SK-N-SH (cell line): ENCODE measurements at regions of chr10 and their contacts with region 1.

Region 1: GRCh38 chr10:4849555-4850242 is 23.7 kb downstream of the AKR1E2 start:
- DNase-seq: peak; percentile 75
- H3K4me3 ChIP-seq: peak overlapping the region in 1 of 2 experiments; percentile 24; a peak in 1 of 4 replicates
- H3K27ac ChIP-seq: no peak overlapping the region
- H3K4me1 ChIP-seq: peaks cover 3 to 13% of the 10 kb centered on the region in 2 experiments; a peak in 2 of 4 replicates
- H3K27me3 ChIP-seq: no peaks in the 10 kb centered on the region
- CTCF ChIP-seq: peak; percentile 100
- EP300 ChIP-seq: no peak
- RAD21 ChIP-seq: peak; percentile 99

Region 2: DNA sequence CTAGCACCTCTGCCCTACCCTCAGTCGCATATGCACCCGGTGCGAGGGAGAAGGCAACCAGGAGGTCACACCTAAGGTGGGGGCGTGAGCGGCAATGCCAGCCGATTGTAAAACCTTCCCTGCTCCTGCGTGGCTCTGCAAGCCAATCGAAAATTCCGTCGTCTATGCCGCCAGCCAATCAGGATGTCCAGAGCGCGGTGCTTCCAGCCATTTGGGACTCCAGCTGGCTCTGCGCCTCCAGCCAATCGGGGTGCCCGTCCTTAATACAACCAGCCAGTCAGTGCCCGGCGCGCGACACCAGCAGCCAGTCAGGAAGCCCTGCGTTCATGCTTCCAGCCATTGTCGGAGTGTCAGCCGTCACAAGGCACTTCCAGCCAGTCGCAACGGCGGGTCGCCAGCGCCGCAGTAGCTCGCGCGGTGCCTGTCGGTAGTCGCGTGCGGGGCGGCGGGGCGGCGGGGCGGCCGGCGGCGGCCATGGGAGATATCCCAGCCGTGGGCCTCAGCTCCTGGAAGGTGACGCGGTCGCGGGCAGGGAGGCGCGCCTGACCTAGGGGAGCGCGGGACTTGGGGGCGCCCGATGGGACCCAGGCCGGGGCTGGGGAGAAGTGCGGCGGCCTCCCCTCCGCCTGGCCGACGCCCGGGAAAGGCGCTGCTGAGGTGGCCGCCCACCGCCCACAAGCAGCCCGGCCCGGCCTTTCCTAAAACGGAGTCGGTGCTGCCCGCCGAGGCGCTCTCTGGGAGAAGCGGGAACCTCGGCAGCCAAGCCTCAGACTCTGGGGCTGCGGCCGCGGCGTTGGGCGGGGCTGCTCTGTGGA is 23.6 kb before region 1 on chr10 and contains the start of gene AKR1E2:
- CTCF ChIA-PET with region 1: interaction called, 20 read pairs
- POLR2A ChIA-PET with region 1: no interaction called
- DNase-seq: peak; percentile 95
- H3K4me3 ChIP-seq: peak within 1 kb of the TSS; percentile 60 to 62
- H3K27ac ChIP-seq: peak within 1 kb of the TSS; percentile 71
- H3K4me1 ChIP-seq: peaks cover 0 to 11% of the 10 kb centered on the region in 2 experiments; a peak in 1 of 4 replicates
- H3K27me3 ChIP-seq: no peaks in the 10 kb centered on the region
- CTCF ChIP-seq: no peak
- EP300 ChIP-seq: no peak
- RAD21 ChIP-seq: no peak
- polyA plus RNA-seq, gene AKR1E2: 5.8 and 6.9 TPM in 2 replicates

Region 3: DNA sequence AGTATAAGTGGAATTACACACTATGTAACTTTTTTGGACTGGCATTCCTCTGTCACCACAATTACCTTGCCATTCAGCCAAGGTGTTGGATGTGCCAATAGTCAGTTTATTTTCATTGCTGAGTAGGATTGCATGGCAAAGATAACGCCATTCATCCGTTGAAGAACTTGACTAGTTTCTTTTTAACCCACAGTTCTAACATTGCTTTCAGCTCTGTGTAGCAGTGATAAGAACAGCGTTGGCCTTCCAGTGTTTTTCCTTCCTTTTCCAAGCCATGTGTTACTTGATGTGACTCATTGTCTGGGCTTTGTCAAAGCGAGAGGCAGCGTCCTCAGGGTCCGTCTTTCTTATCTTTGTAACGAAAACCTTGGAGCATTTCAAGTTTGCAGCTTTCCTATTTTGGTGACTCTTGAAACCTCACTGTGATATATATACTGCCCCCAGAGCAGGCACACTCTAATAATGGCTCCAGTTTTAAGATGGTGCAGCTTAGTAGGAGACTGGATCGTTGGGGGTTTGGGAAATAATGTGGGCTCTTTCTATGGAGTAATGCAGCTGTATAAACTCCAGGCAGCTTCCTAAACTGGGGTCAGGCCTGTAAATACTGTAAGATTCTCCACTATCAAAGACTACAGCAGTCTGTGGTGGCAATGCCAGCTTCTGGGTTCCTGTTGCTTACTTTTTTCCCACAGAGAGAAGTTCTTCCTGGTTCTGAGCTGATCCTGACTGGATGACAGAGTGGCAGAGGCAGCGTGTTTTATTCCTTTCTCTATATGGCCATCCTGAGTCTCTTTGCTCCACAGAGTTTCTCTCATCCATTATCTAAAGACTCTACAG is 18.0 kb after region 1 on chr10:
- CTCF ChIA-PET with region 1: interaction called, 19 read pairs
- POLR2A ChIA-PET with region 1: no interaction called
- DNase-seq: no peak
- H3K4me3 ChIP-seq: no peak overlapping the region
- H3K27ac ChIP-seq: no peak overlapping the region
- H3K4me1 ChIP-seq: no peaks in the 10 kb centered on the region
- H3K27me3 ChIP-seq: no peaks in the 10 kb centered on the region
- CTCF ChIP-seq: no peak
- EP300 ChIP-seq: no peak
- RAD21 ChIP-seq: no peak

Region 4: GRCh38 chr10:5094265-5095205 is 244.8 kb after region 1 on chr10 and contains the start of gene AKR1C3:
- CTCF ChIA-PET with region 1: interaction called, 114 read pairs
- POLR2A ChIA-PET with region 1: no interaction called
- DNase-seq: peak; percentile 32
- H3K4me3 ChIP-seq: peak within 1 kb of the TSS; percentile 48 to 57
- H3K27ac ChIP-seq: no peak within 1 kb of the TSS; a peak in 1 of 4 replicates
- H3K4me1 ChIP-seq: no peaks in the 10 kb centered on the region; a peak in 2 of 4 replicates
- H3K27me3 ChIP-seq: no peaks in the 10 kb centered on the region
- CTCF ChIP-seq: peak; percentile 73
- EP300 ChIP-seq: no peak
- RAD21 ChIP-seq: peak; percentile 66
- polyA plus RNA-seq, gene AKR1C3: 0.28 and 0.70 TPM in 2 replicates

Region 5: DNA sequence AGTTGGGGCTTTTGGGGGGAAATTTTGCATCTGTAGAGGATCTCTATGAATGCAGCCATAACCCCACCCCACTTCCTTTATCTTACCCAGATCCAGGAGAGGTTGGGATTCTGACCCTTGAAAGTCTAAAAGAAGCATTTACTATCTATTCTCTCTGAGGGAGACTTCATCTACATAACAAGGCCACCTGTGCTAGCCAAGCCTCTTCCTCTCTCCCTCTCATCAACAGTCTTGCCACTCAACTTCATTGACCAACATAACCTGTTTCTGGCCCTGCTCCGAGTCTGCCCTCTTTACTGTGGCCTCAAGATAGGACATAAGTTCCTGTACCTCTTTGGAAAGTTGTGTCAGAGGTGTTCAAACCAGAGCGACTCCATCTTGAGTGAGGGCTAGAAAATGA is 535.5 kb after region 1 on chr10:
- CTCF ChIA-PET with region 1: interaction called, 10 read pairs
- POLR2A ChIA-PET with region 1: no interaction called
- DNase-seq: no peak
- H3K4me3 ChIP-seq: no peak overlapping the region
- H3K27ac ChIP-seq: no peak overlapping the region
- H3K4me1 ChIP-seq: no peaks in the 10 kb centered on the region; a peak in 1 of 4 replicates
- H3K27me3 ChIP-seq: no peaks in the 10 kb centered on the region; the same call in 1 of the 2 replicates
- CTCF ChIP-seq: no peak
- EP300 ChIP-seq: no peak
- RAD21 ChIP-seq: no peak